Mammary epithelial cell (primary cell): ENCODE measurements at regions of chr9 and their contacts with region 1.

Region 1: GRCh38 chr9:114472765-114473446 is 32.4 kb downstream of the WHRN start:
- DNase-seq: peak; percentile 77
- H3K4me3 ChIP-seq: no peak overlapping the region
- H3K27ac ChIP-seq: no peak overlapping the region
- H3K4me1 ChIP-seq: peaks cover 17% of the 10 kb centered on the region
- H3K27me3 ChIP-seq: no peaks in the 10 kb centered on the region
- CTCF ChIP-seq: no peak

Region 2: GRCh38 chr9:113963017-113963620 is 509.8 kb before region 1 on chr9:
- CTCF ChIA-PET with region 1: no interaction called
- dilution Hi-C with region 1: no loop called
- in situ Hi-C with region 1: no loop called
- intact Hi-C with region 1: no loop called
- DNase-seq: peak; percentile 21
- H3K4me3 ChIP-seq: no peak overlapping the region
- H3K27ac ChIP-seq: no peak overlapping the region
- H3K4me1 ChIP-seq: peaks cover 4% of the 10 kb centered on the region
- H3K27me3 ChIP-seq: no peaks in the 10 kb centered on the region
- CTCF ChIP-seq: peak; percentile 82 to 84

Region 3: DNA sequence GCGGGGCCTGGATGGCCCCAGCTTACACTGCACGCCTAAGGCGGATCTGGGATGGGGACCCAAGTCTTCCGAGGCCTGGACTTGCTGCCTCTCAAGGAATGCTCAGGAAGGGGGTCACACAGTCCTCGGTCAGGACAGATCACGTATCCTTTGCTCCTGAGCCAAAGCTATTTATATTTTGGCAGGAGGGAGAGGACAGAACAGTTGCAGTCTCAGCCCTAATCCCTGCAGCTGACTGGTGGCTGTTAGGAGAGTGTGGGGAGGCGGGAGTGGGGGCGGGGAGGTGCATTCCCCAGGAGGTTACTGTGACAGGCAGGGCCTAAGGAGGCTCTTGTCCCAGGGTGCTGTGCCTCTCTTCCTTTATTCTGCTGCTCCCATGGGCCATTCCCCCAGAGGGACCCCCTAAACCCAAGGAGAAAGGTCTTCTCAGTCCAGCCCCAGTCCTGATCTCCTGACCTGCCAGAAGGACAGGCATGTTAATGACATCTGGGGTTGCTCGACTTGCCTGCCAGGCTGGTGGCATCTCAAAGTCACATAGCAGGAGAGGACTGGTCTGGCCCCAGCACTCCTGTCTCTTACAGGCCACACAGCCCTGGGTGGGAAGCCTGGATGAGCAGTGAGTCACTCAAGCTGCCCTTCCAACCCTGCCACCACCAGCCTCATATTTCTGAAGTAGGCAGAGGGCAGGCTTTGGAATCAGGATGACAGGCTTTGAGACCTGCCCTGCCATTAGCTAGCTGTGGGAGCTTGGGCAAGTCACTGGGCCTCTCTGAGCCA is 265.7 kb before region 1 on chr9:
- CTCF ChIA-PET with region 1: no interaction called
- dilution Hi-C with region 1: no loop called
- in situ Hi-C with region 1: no loop called
- intact Hi-C with region 1: no loop called
- DNase-seq: peak; percentile 37
- H3K4me3 ChIP-seq: no peak overlapping the region
- H3K27ac ChIP-seq: no peak overlapping the region
- H3K4me1 ChIP-seq: peaks cover 5% of the 10 kb centered on the region
- H3K27me3 ChIP-seq: no peaks in the 10 kb centered on the region
- CTCF ChIP-seq: no peak

Region 4: DNA sequence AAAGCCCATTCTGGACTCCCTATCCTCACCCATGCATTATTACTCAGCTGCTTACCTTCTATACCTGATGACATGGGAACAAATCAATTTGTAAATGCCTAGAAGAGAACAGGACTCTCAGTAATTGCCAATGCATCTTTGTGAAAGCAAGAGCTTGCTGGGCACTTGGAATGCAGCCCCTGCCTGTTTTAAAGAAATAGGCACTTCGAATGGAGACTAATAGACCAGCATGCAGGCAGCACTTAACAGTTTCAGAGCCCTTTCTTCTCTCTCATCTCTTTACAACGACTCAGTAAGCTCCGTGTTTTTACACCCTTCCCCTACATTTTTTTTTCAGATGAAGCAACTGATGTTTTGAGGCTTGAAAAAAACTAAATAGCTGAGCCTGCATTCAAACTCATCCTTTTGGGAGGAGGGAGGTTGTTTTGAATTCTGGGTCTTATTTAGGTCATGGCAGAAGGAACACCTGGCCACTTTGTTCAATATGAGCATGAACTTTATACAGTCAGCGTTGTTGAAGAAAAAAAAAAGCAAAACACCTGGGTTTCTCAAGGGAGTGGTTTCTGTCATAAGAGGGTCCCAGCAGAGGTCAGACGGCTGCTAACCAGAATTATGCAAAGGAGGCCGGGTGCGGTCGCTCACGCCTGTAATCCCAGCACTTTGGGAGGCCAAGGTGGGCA is 66.9 kb after region 1 on chr9:
- CTCF ChIA-PET with region 1: no interaction called
- dilution Hi-C with region 1: loop called (anchors 5 kb)
- in situ Hi-C with region 1: no loop called
- intact Hi-C with region 1: no loop called
- DNase-seq: no peak
- H3K4me3 ChIP-seq: no peak overlapping the region
- H3K27ac ChIP-seq: no peak overlapping the region
- H3K4me1 ChIP-seq: no peaks in the 10 kb centered on the region
- H3K27me3 ChIP-seq: peaks cover 2% of the 10 kb centered on the region
- CTCF ChIP-seq: no peak